Cardiac septum (tissue), 1 donor: ENCODE measurements at regions of chr1 and their contacts with region 1.

Region 1: GRCh38 chr1:23979878-23980724 is at the start of gene SRSF10:
- DNase-seq: peak; percentile 100
- total RNA-seq, gene SRSF10: 63.4 TPM

Region 2: DNA sequence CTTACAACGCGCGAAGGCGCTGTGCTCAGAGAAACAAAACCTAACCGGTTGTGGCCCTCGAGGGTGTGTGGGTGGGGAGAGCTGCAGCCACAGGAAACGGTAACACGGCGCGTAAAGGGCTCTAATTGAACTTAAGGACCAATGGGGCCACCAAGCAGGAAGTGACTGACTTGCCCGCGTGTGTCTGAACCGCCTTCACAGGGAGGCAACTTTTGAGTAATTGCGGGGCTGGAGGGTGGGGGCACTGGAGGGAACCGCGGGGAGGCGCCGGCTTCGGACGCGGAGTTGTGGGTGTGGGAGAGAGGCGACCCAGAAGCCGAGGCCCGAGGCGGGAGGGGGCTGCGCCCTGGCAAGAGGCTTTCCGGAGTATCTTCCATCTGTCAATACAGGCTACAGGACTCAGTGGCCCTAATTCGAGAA is 21.1 kb before region 1 on chr1:
- intact Hi-C with region 1: loop called (anchors 1 kb)
- DNase-seq: peak; percentile 91

Region 3: GRCh38 chr1:24018611-24019580 is 38.8 kb after region 1 on chr1:
- intact Hi-C with region 1: loop called (anchors 2 kb)
- DNase-seq: peak; percentile 92